ENCODE measurements at regions of chr2 and their contacts with region 1.

Region 1: GRCh38 chr2:96625571-96626552 is 12.2 kb downstream of the KANSL3 start:
- DNase-seq: no peak

Region 2: DNA sequence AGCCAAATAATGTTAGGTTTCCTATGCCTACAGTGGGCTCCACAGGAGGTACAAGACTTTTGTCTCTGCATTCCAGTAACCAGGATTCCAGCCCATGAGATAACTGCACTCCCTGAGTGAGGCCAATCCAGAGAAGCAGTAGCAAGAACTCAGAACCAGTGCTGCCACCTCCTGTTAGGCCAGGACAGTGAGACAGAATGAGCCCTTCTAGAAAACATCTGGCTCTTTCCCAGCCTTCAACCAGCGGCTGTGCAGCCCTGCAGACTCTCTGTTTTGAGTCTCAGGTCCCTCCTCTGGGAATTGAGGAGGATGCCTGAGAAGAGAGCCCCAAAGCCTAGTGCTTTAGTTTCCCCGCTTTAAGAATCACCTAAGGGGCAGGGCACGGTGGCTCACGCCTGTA is 45.1 kb before region 1 on chr2:
- CTCF ChIA-PET with region 1: no interaction called
- POLR2A ChIA-PET with region 1: no interaction called
- DNase-seq: peak; percentile 72

Region 3: GRCh38 chr2:96638144-96639121 is 12.6 kb after region 1 on chr2 and contains the start of gene KANSL3:
- CTCF ChIA-PET with region 1: interaction called, 4 read pairs
- POLR2A ChIA-PET with region 1: interaction called, 21 read pairs
- DNase-seq: peak; percentile 89